CD8-positive, alpha-beta T cell (primary cell): ENCODE measurements at regions of chr19 and their contacts with region 1.

Region 1: DNA sequence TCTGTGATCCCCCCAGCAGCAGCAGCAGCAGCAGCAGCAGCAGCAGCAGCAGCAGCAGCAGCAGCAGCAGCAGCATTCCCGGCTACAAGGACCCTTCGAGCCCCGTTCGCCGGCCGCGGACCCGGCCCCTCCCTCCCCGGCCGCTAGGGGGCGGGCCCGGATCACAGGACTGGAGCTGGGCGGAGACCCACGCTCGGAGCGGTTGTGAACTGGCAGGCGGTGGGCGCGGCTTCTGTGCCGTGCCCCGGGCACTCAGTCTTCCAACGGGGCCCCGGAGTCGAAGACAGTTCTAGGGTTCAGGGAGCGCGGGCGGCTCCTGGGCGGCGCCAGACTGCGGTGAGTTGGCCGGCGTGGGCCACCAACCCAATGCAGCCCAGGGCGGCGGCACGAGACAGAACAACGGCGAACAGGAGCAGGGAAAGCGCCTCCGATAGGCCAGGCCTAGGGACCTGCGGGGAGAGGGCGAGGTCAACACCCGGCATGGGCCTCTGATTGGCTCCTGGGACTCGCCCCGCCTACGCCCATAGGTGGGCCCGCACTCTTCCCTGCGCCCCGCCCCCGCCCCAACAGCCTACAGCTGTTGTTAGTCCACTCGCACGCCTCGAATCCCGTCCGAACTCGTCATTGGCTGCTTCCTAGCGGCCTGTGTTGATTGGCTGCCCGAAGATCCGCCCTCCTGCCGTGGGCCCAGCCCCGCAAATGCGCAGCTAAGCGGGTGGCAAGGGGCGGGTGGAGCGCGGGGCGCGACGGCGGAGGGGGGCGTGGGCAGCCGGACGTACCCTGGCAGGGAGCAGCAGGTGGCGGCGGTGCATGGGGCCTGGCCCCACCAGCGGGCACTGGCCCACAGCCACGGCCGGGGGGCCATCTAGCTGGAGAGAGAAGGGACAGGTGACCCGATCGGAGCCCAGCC is 1.4 kb upstream of the SIX5 start:
- DNase-seq: peak; percentile 79 to 94 (median 92)
- ATAC-seq: peak; percentile 74
- H3K4me3 ChIP-seq: peak overlapping the region; percentile 90 to 99
- H3K4me3 Mint-ChIP-seq: peak overlapping the region; percentile 84
- H3K27ac ChIP-seq: peak overlapping the region in 1 of 2 experiments; percentile 77
- H3K27ac Mint-ChIP-seq: peak overlapping the region; percentile 85
- H3K4me1 ChIP-seq: peaks cover 22% of the 10 kb centered on the region
- H3K4me1 Mint-ChIP-seq: peaks cover 24% of the 10 kb centered on the region
- H3K27me3 ChIP-seq: peaks cover 0 to 6% of the 10 kb centered on the region in 2 experiments
- H3K27me3 Mint-ChIP-seq: peaks cover 7% of the 10 kb centered on the region
- CTCF ChIP-seq: peak; percentile 99

Region 2: GRCh38 chr19:45730389-45731288 is 39.8 kb before region 1 on chr19 and contains the start of gene FBXO46:
- CTCF ChIA-PET with region 1: no interaction called
- POLR2A ChIA-PET with region 1: interaction called, 7 read pairs
- intact Hi-C with region 1: loop called (anchors 1 to 2 kb)
- DNase-seq: peak; percentile 82 to 97 (median 92)
- ATAC-seq: peak; percentile 98
- H3K4me3 ChIP-seq: peak within 1 kb of the TSS; percentile 74 to 91
- H3K4me3 Mint-ChIP-seq: peak within 1 kb of the TSS; percentile 97
- H3K27ac ChIP-seq: peak within 1 kb of the TSS; percentile 67 to 78
- H3K27ac Mint-ChIP-seq: peak within 1 kb of the TSS; percentile 92
- H3K4me1 ChIP-seq: peaks cover 19% of the 10 kb centered on the region
- H3K4me1 Mint-ChIP-seq: peaks cover 32% of the 10 kb centered on the region
- H3K27me3 ChIP-seq: no peaks in the 10 kb centered on the region
- H3K27me3 Mint-ChIP-seq: no peaks in the 10 kb centered on the region
- CTCF ChIP-seq: no peak
- total RNA-seq, gene FBXO46: 15.2 to 17.1 TPM

Region 3: DNA sequence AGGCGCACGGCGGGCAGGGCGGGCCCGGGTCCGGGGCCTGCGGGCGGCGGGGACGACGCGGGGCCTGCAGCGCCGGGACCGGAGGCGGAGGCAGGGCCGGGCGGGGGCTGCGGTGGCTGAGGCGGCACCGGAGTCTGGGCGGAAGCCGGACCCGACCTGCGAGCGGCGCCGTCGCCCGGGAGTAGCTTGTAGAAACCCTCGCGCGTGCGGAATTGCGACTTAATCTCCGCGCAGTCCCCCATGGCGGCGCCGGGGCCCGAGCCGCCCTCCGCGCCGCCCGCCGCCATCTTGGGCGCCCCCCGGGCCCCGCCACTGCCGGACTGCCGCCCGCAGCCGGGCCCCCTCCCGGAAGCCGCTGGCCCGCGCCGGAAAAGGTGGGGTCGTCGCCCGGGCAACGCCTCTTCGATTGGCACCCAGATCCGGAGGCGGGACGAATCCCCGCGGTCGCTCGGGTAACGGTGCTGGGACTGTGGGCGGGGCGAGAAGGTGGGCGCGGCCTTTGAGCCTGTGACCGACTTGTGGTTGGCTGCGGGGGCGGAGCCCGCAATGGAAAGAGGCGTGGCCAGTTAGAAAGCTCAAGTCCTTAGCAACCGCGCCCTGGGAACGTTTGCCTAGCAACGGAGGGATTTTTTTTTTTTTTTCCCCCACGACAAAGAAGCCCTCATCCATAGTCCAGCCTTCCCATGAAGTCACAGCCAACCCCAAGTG is 22.2 kb after region 1 on chr19 and contains the start of gene DMWD:
- CTCF ChIA-PET with region 1: interaction called, 313 read pairs
- POLR2A ChIA-PET with region 1: interaction called, 25 read pairs
- intact Hi-C with region 1: loop called (anchors 1 kb)
- DNase-seq: peak; percentile 99 to 100 (median 99)
- ATAC-seq: peak; percentile 96
- H3K4me3 ChIP-seq: peak within 1 kb of the TSS; percentile 55 to 62
- H3K4me3 Mint-ChIP-seq: peak within 1 kb of the TSS; percentile 90
- H3K27ac ChIP-seq: peak within 1 kb of the TSS; percentile 37 to 63
- H3K27ac Mint-ChIP-seq: peak within 1 kb of the TSS; percentile 75
- H3K4me1 ChIP-seq: peaks cover 28% of the 10 kb centered on the region
- H3K4me1 Mint-ChIP-seq: peaks cover 37% of the 10 kb centered on the region
- H3K27me3 ChIP-seq: peaks cover 3 to 6% of the 10 kb centered on the region in 2 experiments
- H3K27me3 Mint-ChIP-seq: peaks cover 18% of the 10 kb centered on the region
- CTCF ChIP-seq: no peak
- total RNA-seq, gene DMWD: 23.8 to 25.5 TPM

Region 4: DNA sequence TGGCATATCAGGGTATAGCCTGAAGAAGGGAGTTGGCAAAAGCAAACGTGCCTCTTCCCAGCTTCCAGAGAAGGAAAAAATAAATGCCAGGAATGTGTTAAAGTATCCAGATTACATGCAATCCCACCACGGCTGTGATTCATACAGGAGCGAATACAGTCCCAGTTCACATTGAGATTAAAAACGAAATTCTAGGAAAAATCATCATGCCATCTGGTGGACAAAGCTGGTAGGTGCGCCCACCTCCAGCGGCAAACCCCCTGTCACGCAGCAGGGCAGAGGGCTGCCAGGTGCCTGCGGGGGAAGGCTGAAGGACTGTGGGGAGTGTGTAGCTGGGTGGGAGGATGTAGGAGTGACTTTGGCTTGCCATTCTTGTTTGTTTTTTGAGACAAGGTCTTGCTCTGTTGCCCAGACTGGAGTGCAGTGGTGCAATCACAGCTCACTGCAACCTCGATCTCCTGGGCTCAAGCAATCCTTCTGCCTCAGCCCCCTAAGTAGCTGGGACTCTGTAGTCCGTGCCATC is 28.6 kb after region 1 on chr19:
- CTCF ChIA-PET with region 1: interaction called, 313 read pairs
- POLR2A ChIA-PET with region 1: interaction called, 28 read pairs
- intact Hi-C with region 1: loop called (anchors 1 kb)
- DNase-seq: peak; percentile 28 to 80 (median 66)
- ATAC-seq: peak; percentile 97
- H3K4me3 ChIP-seq: no peak overlapping the region
- H3K4me3 Mint-ChIP-seq: no peak overlapping the region
- H3K27ac ChIP-seq: no peak overlapping the region
- H3K27ac Mint-ChIP-seq: no peak overlapping the region
- H3K4me1 ChIP-seq: peaks cover 5% of the 10 kb centered on the region
- H3K4me1 Mint-ChIP-seq: peaks cover 7% of the 10 kb centered on the region
- H3K27me3 ChIP-seq: peaks cover 3 to 12% of the 10 kb centered on the region in 2 experiments
- H3K27me3 Mint-ChIP-seq: peaks cover 26% of the 10 kb centered on the region
- CTCF ChIP-seq: peak; percentile 92

Region 5: GRCh38 chr19:45927565-45928261 is 157.3 kb after region 1 on chr19:
- CTCF ChIA-PET with region 1: no interaction called
- POLR2A ChIA-PET with region 1: no interaction called
- intact Hi-C with region 1: no loop called
- DNase-seq: peak; percentile 72 to 94 (median 88)
- ATAC-seq: peak; percentile 100
- H3K4me3 ChIP-seq: no peak overlapping the region
- H3K4me3 Mint-ChIP-seq: no peak overlapping the region
- H3K27ac ChIP-seq: no peak overlapping the region
- H3K27ac Mint-ChIP-seq: peak overlapping the region; percentile 7
- H3K4me1 ChIP-seq: peaks cover 7% of the 10 kb centered on the region
- H3K4me1 Mint-ChIP-seq: peaks cover 8% of the 10 kb centered on the region
- H3K27me3 ChIP-seq: no peaks in the 10 kb centered on the region
- H3K27me3 Mint-ChIP-seq: peaks cover 4% of the 10 kb centered on the region
- CTCF ChIP-seq: peak; percentile 15

Region 6: DNA sequence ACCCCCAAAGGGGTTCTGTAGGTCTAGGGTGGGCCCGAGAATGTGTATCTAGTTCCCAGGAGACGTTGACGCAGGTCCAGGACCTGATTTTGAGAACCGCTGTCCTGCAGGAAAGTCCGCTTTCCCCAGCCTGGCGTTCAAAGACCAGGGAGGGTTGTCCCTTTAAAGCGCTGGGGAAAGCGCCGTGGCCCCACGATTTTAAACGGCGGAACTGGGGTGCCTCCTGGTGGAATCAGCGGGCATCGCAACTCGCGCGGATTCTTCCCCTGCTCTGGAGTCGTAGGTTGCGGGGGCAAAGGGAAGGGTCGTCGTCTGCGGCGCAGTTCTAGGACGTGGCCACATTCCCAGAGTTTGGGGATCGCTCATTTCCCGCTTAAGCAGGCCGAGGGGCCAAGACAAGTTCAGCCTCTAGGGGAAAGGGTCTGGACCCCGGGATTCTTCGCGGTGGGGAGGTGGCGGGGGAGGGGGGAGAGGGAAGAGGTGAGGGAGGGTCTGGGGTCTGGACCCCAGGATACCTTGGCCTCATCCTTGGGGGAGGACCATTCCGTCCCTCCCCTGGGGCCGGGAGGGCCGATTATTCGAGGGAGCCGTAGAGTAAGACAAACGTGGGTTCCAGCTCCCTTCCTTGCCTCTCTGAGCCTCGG is 717.5 kb after region 1 on chr19:
- CTCF ChIA-PET with region 1: no interaction called
- POLR2A ChIA-PET with region 1: no interaction called
- intact Hi-C with region 1: no loop called
- DNase-seq: peak; percentile 58 to 86 (median 73)
- ATAC-seq: peak; percentile 87
- H3K4me3 ChIP-seq: no peak overlapping the region
- H3K4me3 Mint-ChIP-seq: no peak overlapping the region
- H3K27ac ChIP-seq: no peak overlapping the region
- H3K27ac Mint-ChIP-seq: no peak overlapping the region
- H3K4me1 ChIP-seq: peaks cover 33% of the 10 kb centered on the region
- H3K4me1 Mint-ChIP-seq: peaks cover 22% of the 10 kb centered on the region
- H3K27me3 ChIP-seq: peaks cover 42 to 46% of the 10 kb centered on the region in 2 experiments
- H3K27me3 Mint-ChIP-seq: peaks cover 58% of the 10 kb centered on the region
- CTCF ChIP-seq: peak; percentile 76